ENCODE measurements at regions of chr3 and their contacts with region 1.

Region 1: DNA sequence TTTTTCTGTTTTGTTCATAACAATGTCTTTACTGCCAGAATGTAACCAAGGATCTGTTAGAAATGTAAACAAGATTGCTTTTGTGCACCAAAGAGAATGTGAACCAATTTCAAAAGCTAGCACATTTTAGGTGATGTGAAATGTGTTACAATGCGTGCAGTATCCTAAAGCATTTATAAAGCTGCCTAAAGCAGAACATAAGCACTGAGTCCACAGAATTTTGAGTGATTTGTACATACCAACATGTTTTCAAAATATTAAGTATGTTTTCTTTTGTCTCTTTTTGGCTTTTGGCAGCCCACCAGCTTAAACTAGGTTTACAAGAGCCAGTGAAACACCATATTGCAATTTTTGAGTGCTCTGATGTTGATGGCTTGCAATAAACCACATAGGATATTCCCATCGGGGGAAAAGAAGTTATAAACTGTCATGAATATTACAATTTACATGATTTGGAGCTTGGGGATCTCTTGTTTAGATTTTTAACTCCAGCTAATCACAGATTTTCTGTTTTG is 364.0 kb downstream of the ZIC1 start:
- DNase-seq: no peak
- CTCF ChIP-seq: no peak

Region 2: DNA sequence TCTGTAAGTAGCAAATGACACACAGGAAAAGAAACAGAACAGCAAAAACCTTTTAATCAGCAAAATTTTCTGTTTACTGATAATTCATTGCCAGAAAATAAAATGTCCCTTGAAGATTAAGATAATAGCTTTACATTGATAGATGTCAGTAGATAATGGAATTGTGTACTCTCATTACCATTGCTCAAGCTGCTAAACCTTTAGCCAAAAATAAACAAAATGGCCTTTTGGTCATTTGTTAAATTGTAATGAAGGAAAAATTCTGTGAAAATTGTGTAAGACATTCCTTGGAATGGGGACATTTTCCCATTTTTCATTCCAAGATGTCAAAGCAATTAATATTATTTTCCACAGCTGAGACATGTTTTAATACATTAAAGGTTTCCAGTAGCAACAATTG is 1802.0 kb before region 1 on chr3:
- CTCF ChIA-PET with region 1: no interaction called
- POLR2A ChIA-PET with region 1: no interaction called
- DNase-seq: no peak
- CTCF ChIP-seq: no peak

Region 3: GRCh38 chr3:147758771-147759170 is 14.4 kb before region 1 on chr3:
- CTCF ChIA-PET with region 1: interaction called, 16 read pairs
- POLR2A ChIA-PET with region 1: no interaction called
- DNase-seq: no peak
- CTCF ChIP-seq: no peak

Region 4: DNA sequence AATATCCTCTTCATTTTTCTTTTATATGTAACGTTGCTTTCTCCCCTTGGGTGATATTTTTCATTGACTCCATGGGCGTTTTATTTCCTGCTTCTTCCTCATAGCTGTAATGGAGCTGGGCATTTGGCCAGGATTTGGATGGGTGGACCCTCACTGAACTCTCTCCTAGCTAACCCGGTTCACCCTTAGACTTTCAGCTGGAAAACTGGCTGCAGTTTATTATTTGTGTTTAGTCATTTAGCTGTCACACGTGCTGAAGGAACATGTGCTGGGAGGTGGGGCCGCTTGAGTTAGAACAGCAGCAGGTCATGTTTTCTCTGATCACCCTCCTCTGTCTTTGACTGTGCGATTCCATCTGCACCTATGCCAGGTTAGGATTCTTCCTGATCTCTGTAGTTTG is 43.6 kb after region 1 on chr3:
- CTCF ChIA-PET with region 1: no interaction called
- POLR2A ChIA-PET with region 1: no interaction called
- DNase-seq: no peak
- CTCF ChIP-seq: no peak